ENCODE measurements at regions of chr9 and their contacts with region 1.

Region 1: DNA sequence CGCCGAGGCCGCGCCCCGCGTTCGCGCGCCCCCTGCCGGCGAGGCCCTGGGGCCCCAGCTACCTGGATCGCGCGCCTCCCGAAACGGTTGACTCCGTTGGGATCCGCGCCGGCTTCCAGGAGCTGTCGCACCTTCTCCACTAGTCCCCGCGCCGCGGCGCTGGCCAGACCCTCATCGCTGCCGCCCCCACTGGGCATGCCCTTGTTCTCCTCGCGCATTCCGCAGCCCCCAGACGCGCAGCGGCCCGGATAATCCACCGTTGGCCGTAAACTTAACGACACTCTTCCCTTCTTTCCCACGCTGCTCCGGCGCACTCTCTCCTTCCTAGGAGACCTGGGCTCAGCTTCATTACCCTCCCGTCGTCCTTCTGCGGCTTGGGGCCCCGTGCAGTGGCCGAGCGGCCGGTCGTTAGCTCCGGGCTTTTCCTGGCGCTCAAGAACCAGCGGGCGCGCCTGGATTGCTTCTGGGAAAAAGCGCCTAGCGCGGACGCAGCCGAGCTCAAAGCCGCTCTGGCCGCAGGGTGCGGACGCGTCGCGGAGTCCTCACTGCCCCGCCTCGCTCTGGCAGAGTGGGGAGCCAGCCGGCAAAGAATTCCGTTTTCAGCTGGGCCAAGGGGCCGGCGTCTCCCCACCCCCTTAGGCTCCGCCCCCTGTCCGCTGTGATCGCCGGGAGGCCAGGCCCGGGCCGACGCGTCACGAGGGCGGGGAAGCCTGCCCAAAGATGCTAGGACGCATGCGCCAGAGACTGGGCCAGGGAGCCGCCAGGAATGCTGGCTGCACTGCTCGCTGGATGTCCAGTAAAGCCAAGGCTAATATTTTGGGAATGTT is at the start of gene CDKN2B:
- DNase-seq: peak; percentile 63
- H3K4me3 Mint-ChIP-seq: peak within 1 kb of the TSS; percentile 74
- H3K27ac Mint-ChIP-seq: no peak within 1 kb of the TSS
- H3K4me1 Mint-ChIP-seq: peaks cover 18% of the 10 kb centered on the region
- H3K27me3 Mint-ChIP-seq: peaks cover 62% of the 10 kb centered on the region
- total RNA-seq, gene CDKN2B: not detected

Region 2: DNA sequence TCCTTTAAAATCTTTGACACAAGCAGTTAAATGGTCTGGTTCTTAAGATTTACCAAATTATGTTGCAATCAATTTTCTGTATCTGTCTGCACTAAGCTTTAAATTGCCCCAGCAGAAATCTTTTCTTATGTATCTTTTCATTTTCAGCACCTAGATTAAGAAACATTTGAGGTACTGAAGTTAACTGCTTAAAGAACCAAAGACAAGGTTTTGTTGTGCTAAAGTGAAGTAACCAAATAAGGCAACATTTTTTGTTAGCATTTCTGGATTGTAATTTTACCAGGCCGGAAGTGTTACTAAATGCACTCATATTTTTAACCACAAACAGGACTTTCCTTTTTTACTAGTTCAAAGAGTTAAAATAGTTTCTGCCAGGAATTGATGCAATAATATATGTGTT is 230.6 kb before region 1 on chr9:
- CTCF ChIA-PET with region 1: no interaction called
- intact Hi-C with region 1: no loop called
- DNase-seq: no peak
- H3K4me3 Mint-ChIP-seq: no peak overlapping the region
- H3K27ac Mint-ChIP-seq: no peak overlapping the region
- H3K4me1 Mint-ChIP-seq: peaks cover 3% of the 10 kb centered on the region
- H3K27me3 Mint-ChIP-seq: no peaks in the 10 kb centered on the region

Region 3: GRCh38 chr9:21965401-21965951 is 43.5 kb before region 1 on chr9:
- CTCF ChIA-PET with region 1: interaction called, 16 read pairs
- intact Hi-C with region 1: loop called (anchors 1 kb)
- DNase-seq: peak; percentile 68
- H3K4me3 Mint-ChIP-seq: peak overlapping the region; percentile 51
- H3K27ac Mint-ChIP-seq: no peak overlapping the region
- H3K4me1 Mint-ChIP-seq: peaks cover 17% of the 10 kb centered on the region
- H3K27me3 Mint-ChIP-seq: peaks cover 86% of the 10 kb centered on the region

Region 4: DNA sequence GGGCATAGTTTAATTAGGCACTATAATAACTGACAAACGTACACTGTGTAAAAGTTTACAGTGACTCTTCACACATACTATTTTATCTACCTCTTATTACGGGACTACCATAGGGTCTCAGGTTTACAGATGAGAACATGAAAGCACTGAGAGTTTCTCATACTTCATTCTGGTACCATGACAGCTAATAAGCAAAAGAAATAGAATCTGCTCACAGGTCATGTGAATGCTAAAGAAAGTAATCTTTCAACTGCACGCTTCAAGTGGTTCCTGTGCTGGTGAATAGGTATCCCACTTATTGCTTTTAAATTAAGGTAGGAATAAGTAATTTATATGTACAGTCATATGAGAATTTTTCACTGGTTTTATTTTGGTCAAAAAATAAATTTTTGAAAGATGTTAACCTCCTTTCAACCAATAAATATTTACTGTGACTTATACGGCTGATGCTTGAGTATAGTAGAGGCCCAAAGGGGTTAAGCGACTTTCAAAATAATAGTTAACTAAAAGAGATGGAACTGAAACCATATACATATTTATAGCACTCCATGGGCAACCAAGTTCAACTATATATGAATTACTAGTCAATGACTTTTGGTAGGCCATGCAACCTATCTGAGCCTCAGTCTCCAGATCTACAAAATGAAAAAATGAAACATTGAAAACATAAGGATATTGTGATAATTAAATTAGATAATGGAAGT is 22.8 kb before region 1 on chr9:
- CTCF ChIA-PET with region 1: interaction called, 17 read pairs
- intact Hi-C with region 1: no loop called
- DNase-seq: no peak
- H3K4me3 Mint-ChIP-seq: no peak overlapping the region
- H3K27ac Mint-ChIP-seq: no peak overlapping the region
- H3K4me1 Mint-ChIP-seq: peaks cover 3% of the 10 kb centered on the region
- H3K27me3 Mint-ChIP-seq: peaks cover 71% of the 10 kb centered on the region

Region 5: DNA sequence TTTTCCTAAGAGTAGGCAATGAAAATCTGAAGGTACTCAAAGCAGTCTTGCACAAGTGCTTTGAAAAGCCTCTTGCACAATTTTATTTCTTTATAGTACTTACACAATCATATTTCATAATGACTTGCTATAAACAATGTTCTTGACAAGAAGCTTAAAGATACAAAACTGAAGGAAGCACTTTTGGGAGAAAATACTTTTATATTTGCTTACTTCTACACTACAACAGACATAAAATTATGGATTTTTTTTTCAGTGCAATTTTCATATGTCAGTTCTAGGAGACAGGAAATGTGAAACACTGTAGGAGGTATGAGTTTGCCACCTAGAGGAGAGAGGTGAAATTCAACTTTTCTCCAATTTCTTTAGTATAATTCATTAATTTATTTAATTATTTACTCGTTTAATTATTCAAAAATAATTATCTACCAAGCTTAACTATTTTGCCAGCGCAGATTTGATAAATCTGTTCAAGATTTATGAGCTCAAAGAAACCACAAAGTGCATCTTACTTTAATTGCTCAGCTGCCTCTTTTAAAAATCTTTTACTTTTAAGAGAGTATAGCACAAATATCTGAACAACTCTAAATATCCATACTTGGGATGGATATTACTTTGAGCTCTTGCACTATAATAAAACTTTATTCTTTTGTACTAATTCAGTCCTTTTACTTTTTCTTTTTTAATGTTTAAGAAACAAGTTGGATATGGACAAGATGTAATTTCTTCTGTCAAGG is 29.2 kb after region 1 on chr9:
- CTCF ChIA-PET with region 1: interaction called, 20 read pairs
- intact Hi-C with region 1: loop called (anchors 2 kb)
- DNase-seq: no peak
- H3K4me3 Mint-ChIP-seq: no peak overlapping the region
- H3K27ac Mint-ChIP-seq: no peak overlapping the region
- H3K4me1 Mint-ChIP-seq: peaks cover 9% of the 10 kb centered on the region
- H3K27me3 Mint-ChIP-seq: peaks cover 16% of the 10 kb centered on the region

Region 6: DNA sequence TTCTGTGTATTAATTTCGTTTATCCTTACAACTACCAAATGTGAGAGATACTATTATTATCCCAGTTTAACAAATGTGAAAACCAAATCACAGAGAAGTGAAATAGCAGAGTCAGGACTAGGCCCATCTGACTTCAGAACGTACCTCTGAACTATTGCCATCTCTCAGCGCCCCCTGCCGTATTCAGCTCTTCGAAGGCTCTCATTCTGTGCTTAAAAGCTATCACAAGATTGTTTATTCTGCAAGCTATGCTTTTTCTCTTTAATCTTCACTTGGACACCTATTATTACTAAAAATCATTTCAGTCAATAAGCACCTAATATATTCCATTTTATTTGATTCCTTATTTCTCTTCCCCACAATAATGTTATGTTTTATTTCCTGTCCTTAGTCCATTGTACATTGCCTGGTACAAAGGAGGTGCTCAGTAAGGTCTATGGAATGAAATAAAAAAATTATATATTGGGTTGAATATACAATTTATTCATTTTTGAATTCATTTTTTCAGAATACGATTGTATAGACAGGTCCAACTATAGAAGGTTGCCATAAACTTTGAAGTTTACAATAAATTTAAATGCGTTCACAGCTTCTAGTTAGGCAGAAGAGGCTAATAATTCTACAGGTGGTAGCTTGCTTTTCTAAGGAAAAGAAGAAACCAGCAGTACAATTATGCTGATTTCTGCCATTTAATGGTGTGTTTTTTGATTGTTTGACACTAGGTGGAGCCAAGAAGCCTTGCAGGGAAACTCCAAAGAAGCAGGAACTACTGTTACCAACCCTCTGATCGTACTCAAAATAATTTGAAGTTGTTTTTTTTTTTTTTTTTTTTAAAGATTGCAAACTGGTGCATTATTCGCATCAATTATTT is 235.4 kb after region 1 on chr9:
- CTCF ChIA-PET with region 1: interaction called, 5 read pairs
- intact Hi-C with region 1: loop called (anchors 2 kb)
- DNase-seq: peak; percentile 46
- H3K4me3 Mint-ChIP-seq: no peak overlapping the region
- H3K27ac Mint-ChIP-seq: no peak overlapping the region
- H3K4me1 Mint-ChIP-seq: peaks cover 29% of the 10 kb centered on the region
- H3K27me3 Mint-ChIP-seq: peaks cover 19% of the 10 kb centered on the region